ENCODE measurements at regions of chr14 and their contacts with region 1.

Region 1: DNA sequence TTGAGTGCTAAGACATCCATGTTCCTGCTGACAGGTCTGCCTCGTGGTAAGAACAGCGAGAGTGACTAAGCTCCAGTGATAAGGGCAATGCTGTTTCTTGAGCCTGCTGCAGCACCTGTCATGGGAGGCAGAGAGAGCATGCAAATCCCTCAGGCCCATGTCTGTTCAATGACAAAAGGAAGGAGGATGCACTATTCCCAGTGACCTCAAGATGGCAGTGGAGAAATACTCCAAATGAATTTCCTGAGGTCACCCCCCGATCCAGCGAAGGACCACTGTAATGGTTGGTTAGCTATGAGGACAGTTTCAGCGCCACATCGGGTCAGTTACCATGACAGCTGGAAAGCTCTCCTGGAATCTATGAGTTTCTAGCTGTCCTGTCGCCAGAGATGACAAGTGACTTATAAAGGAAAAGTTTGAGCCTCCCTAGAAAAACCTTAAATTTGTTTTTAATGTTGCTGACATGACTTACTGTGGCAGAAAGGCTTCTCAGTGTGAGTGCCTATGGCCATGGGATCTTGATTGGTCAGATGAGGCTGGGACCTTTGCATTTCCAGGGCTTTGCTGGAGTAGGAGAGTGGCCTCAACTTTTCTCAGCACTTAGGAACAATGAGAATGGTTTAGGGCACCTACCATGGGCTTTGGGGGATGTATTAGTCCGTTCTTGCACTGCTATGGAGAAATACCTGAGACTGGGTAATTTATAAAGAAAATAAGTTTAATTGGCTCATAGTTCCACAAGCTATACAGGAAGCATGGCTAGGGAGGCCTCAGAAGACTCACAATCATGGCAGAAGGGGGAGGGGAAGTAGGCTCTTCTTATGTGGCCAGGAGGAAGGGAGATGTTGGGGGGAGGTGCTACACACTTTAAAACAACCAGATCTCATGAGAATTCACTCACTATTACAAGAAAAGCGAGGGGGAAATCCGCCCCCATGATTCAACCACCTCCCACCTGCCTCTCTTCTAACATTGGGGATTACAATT is 88.0 kb upstream of the TMEM260 start:
- DNase-seq: peak; percentile 18
- CTCF ChIP-seq: peak; percentile 70

Region 2: DNA sequence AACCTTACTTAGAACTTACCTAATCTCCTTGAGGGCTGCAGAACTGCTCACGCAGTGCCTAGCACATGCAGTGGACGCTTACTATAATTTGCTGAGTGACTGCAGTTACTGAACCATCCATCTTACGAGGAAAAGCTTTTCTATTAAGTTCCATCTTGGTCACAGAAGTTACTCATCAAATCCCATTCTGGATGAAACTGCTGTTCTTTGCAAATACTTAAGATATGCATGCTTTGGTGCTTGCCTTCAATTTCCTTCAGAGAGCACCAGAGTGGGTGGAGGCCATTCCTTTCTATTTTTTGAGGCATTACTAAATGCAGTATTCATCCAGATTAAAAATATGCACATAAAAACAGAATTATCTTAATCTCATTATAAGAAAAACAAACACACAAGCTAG is 391.0 kb before region 1 on chr14:
- CTCF ChIA-PET with region 1: no interaction called
- POLR2A ChIA-PET with region 1: no interaction called
- DNase-seq: no peak
- CTCF ChIP-seq: no peak

Region 3: DNA sequence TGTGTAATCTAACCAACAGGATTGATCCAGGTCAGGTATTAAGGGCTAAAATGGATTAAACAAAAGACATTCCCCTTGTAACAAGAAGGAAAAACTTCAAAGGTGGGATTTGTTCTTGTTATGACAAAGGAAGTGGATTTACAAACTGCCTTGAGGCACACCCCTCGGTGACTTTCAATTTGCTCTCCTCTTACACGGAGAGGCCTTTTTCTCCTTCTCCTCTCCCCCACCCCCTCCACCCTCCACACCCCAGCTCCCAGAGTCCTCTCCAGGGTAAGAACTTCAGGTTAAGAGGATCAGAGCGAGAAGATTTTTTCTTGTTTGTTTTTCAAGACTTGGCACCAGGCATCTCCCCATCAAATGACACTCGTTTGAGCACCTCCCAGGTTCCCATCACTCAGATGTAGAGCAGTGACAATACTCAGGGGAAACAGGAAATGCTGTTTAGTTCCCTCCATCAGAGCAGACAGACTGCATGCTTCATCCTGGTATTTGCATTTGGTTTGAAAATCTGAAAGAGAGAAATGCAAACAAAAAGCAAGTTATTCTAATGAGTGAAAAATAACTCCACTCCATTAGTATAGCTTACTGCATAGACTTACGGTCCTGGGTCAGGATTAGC is 10.4 kb after region 1 on chr14:
- CTCF ChIA-PET with region 1: interaction called, 20 read pairs
- POLR2A ChIA-PET with region 1: no interaction called
- DNase-seq: no peak
- CTCF ChIP-seq: no peak

Region 4: DNA sequence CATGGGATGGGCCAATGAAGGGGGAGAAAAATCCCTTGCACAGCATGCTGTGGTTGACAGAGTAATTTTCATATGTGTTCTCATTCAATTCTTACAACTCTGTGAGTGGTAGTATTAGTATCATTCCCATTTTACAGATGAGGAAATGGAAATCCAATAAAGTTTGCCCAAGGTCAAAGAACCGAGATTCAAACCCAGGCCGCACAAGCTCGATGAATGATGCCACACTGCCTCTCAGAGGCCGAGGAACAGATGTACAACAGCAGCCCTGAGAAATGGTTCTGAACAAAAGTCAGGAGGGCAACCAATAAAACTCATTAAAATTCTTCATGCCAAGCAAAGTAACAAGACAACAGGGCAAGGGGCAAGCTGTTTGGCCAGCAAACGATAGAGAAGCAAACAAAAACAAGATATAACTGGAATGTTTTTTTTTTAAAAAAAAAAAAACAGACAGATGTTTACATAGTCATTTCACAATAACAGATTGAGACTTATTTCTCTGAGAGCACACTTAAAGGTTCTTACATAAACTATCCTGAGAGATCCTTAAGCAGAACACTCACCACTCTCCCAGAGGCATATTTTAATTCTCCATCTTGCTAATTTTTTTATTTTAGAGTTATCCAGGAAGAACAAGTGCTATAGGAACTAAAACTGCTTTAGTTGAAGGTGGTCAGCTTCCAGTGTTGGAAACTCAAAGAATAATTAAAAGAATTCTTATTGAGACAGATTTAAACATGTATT is 691.3 kb after region 1 on chr14:
- CTCF ChIA-PET with region 1: interaction called, 22 read pairs
- POLR2A ChIA-PET with region 1: no interaction called
- DNase-seq: peak; percentile 11
- CTCF ChIP-seq: peak; percentile 65

Region 5: GRCh38 chr14:57293866-57294837 is 802.6 kb after region 1 on chr14:
- CTCF ChIA-PET with region 1: interaction called, 18 read pairs
- POLR2A ChIA-PET with region 1: no interaction called
- DNase-seq: no peak
- CTCF ChIP-seq: no peak

Region 6: GRCh38 chr14:57317316-57317715 is 825.7 kb after region 1 on chr14:
- CTCF ChIA-PET with region 1: interaction called, 37 read pairs
- POLR2A ChIA-PET with region 1: no interaction called
- DNase-seq: peak; percentile 57
- CTCF ChIP-seq: peak; percentile 75